ENCODE measurements at regions of chr9 and their contacts with region 1.

Region 1: GRCh38 chr9:6305954-6306563 is 22.1 kb upstream of the TPD52L3 start:
- ATAC-seq: peak in 5 of 8 experiments; percentile 35 to 70 (median 40)
- H3K4me3 ChIP-seq: no peak overlapping the region
- H3K27ac ChIP-seq: no peak overlapping the region
- H3K4me1 ChIP-seq: no peaks in the 10 kb centered on the region

Region 2: GRCh38 chr9:5886114-5886939 is 419.7 kb before region 1 on chr9:
- in situ Hi-C with region 1: loop called in 5 of 9 experiments (anchors 25 kb)
- ATAC-seq: peak; percentile 99 to 100 (median 100)
- H3K4me3 ChIP-seq: no peak overlapping the region
- H3K27ac ChIP-seq: no peak overlapping the region
- H3K4me1 ChIP-seq: no peaks in the 10 kb centered on the region

Region 3: DNA sequence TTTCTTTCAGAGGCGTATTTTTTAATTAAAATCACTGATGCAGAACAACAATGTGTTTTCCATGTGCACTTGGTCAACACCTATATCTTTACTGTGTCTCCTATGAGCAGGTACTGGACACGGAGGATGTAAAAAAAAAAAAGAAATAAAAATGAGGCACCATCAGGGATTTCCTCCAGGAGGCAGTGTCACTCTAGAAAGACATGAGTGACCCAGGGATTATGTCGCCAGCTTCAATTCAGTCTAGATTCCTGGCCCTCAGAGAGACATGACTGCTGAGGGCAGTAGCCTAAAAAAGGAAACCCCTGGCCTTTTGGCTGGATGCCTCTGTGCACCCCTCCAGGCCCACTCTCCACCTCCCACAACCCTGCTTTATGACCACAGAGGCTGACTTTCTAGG is 108.7 kb before region 1 on chr9:
- in situ Hi-C with region 1: loop called in 1 of 9 experiments (anchors 10 kb)
- ATAC-seq: peak in 3 of 8 experiments; percentile 25 to 76 (median 31)
- H3K4me3 ChIP-seq: no peak overlapping the region
- H3K27ac ChIP-seq: no peak overlapping the region
- H3K4me1 ChIP-seq: no peaks in the 10 kb centered on the region

Region 4: GRCh38 chr9:6788162-6789016 is 482.3 kb after region 1 on chr9:
- in situ Hi-C with region 1: no loop called
- ATAC-seq: peak; percentile 70 to 94 (median 80)
- H3K4me3 ChIP-seq: no peak overlapping the region
- H3K27ac ChIP-seq: no peak overlapping the region
- H3K4me1 ChIP-seq: peaks cover 6 to 14% of the 10 kb centered on the region in 2 donors

Region 5: DNA sequence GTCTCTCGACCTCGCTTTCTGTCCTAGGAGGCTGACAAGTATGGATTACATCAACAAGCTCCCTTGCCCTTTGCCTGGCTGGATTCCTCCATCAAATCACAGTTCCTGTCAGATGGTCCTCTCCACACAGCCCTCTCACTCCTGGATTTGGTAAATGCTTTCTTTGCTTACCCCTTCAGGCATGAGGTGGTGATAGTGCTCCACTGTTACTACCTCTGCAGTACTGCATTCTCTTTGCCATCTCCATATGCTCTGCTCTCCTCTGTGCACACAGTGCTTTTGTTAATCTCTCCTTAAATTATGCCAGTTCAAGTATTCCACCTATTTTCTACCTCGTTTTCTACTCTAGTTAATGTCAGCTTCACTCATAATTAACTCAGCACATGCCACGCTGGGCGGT is 1214.3 kb after region 1 on chr9:
- in situ Hi-C with region 1: no loop called
- ATAC-seq: peak in 1 of 8 experiments; percentile 22
- H3K4me3 ChIP-seq: no peak overlapping the region
- H3K27ac ChIP-seq: no peak overlapping the region
- H3K4me1 ChIP-seq: no peaks in the 10 kb centered on the region

Measured in motor neuron (in vitro differentiated cells).